Upper lobe of right lung (tissue), 1 donor: ENCODE measurements at regions of chr7 and their contacts with region 1.

Region 1: GRCh38 chr7:73851410-73852234 is 9.3 kb upstream of the METTL27 start:
- DNase-seq: no peak
- ATAC-seq: peak; percentile 73
- H3K4me3 ChIP-seq: no peak overlapping the region
- H3K27ac ChIP-seq: peak overlapping the region; percentile 47
- H3K4me1 ChIP-seq: peaks cover 7% of the 10 kb centered on the region
- H3K27me3 ChIP-seq: no peaks in the 10 kb centered on the region
- CTCF ChIP-seq: no peak

Region 2: DNA sequence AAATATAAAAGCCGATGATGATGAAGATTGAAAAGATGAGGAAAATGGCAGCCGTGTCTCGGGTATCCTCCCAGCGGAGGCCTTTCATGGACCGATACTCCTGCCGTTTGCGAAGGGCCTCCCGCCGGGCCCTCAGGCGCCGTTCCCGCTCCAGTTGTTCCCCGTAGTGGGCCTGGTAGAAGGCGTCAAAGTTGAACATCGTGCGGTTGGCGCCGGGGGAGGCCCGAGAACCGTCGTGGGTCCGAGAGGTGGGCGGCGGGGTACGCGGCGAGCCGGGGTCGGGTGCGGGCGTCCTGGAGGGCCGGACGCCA is 168.9 kb before region 1 on chr7:
- intact Hi-C with region 1: no loop called
- DNase-seq: no peak
- ATAC-seq: no peak
- H3K4me3 ChIP-seq: peak overlapping the region; percentile 92
- H3K27ac ChIP-seq: peak overlapping the region; percentile 88
- H3K4me1 ChIP-seq: peaks cover 24% of the 10 kb centered on the region
- H3K27me3 ChIP-seq: no peaks in the 10 kb centered on the region
- CTCF ChIP-seq: no peak

Region 3: DNA sequence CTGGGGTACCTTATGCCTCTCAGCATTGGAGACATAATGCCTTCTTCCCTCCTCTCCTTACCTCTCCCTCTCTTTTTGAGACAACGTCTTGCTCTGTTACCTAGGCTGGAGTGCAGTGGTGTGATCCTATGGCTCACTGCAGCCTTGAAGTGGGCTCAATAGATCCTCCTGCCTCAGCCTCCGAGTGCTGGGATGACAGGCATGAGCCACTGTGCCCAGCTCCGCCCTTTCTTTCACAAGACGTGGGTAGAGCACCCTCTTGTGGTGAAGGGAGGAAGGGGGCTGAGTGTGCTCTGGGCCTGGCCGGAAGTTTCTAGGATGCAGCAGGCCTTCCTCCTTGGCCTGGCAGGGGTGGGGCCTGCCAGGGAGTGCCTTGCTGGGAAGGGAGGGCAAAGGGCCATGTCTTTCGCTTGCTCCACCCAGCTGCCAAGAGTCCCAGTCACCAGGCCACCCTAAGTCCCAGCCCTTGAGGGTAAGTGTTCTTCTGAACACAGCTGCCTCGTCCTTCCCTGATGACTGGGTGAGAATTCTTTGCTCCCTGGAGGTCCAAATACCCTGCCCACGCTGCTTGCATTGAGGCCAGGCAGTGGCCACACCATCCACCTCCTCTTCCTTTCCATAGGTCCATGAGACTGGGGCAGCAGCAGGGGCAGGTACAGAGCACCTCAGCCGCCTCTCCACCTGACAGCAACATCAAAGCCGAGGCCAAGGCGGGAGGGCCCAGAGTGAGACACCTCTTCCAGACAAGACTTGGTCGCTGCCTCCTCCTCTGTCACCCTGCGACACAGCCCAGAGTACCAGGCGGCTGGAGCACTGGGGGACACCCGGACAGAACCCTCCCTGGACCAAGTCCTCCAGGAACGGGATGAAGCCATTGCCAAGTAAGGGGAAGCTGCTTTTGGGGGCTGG is 116.7 kb before region 1 on chr7:
- intact Hi-C with region 1: no loop called
- DNase-seq: peak; percentile 92
- ATAC-seq: peak; percentile 87
- H3K4me3 ChIP-seq: no peak overlapping the region
- H3K27ac ChIP-seq: peak overlapping the region; percentile 56
- H3K4me1 ChIP-seq: peaks cover 5% of the 10 kb centered on the region
- H3K27me3 ChIP-seq: no peaks in the 10 kb centered on the region
- CTCF ChIP-seq: peak; percentile 89

Region 4: DNA sequence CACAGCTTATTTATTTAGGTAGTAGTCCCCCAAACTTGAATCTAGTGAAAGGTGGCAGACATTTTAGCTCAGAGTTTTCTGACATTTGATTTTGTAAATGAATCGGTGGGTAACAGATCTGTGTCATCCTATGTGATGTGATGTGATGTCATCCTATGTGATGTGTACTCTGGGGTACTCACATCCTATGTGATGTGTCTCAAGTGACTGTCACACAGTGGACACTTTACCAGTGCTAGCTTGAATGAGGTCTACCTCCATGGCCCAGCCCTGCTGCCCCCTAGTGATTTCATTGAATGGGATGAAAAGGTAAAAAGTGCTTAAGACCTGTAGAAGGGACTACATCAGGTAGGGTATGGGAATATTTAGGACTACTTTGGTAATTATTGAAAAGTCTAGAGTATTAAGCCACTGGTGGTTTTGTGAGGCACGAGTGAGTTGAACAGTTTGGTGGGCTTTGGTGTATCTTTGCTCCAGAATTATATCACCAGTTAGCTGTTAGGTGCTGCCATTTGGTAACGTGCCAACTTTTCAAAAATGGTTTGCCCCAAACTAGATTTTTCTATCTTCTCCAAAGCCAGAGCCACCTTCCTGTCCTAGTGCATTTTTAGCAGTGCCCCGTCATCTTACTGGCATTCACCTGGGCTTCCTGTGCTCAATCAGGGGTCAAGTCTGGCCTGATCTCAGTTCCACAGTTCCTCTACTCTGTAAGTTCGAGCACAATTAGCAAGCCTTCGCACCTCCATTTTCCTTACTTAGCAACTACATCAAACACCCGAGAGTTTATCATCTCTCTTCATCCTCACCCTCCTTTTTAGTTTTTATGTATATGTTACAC is 332.2 kb after region 1 on chr7:
- intact Hi-C with region 1: loop called (anchors 10 kb)
- DNase-seq: no peak
- ATAC-seq: peak; percentile 12
- H3K4me3 ChIP-seq: no peak overlapping the region
- H3K27ac ChIP-seq: no peak overlapping the region
- H3K4me1 ChIP-seq: peaks cover 92% of the 10 kb centered on the region
- H3K27me3 ChIP-seq: no peaks in the 10 kb centered on the region
- CTCF ChIP-seq: peak; percentile 6